ENCODE measurements at regions of chr4 and their contacts with region 1.

Region 1: GRCh38 chr4:15457406-15458201 is 12.1 kb upstream of the CC2D2A start:
- DNase-seq: peak in 2 of 9 experiments; percentile 45 to 63
- ATAC-seq: peak; percentile 59
- H3K4me3 ChIP-seq: no peak overlapping the region
- H3K4me3 Mint-ChIP-seq: no peak overlapping the region
- H3K27ac ChIP-seq: no peak overlapping the region
- H3K27ac Mint-ChIP-seq: no peak overlapping the region
- H3K4me1 ChIP-seq: no peaks in the 10 kb centered on the region
- H3K4me1 Mint-ChIP-seq: peaks cover 3% of the 10 kb centered on the region
- H3K27me3 ChIP-seq: no peaks in the 10 kb centered on the region
- H3K27me3 Mint-ChIP-seq: no peaks in the 10 kb centered on the region
- CTCF ChIP-seq: peak; percentile 77

Region 2: GRCh38 chr4:15226203-15226602 is 231.4 kb before region 1 on chr4:
- CTCF ChIA-PET with region 1: interaction called, 179 read pairs
- POLR2A ChIA-PET with region 1: no interaction called
- intact Hi-C with region 1: loop called (anchors 1 kb)
- DNase-seq: no peak
- ATAC-seq: no peak
- H3K4me3 ChIP-seq: no peak overlapping the region
- H3K4me3 Mint-ChIP-seq: no peak overlapping the region
- H3K27ac ChIP-seq: no peak overlapping the region
- H3K27ac Mint-ChIP-seq: no peak overlapping the region
- H3K4me1 ChIP-seq: peaks cover under 1% of the 10 kb centered on the region
- H3K4me1 Mint-ChIP-seq: no peaks in the 10 kb centered on the region
- H3K27me3 ChIP-seq: no peaks in the 10 kb centered on the region
- H3K27me3 Mint-ChIP-seq: no peaks in the 10 kb centered on the region
- CTCF ChIP-seq: no peak

Region 3: GRCh38 chr4:15238720-15239119 is 218.9 kb before region 1 on chr4:
- CTCF ChIA-PET with region 1: interaction called, 179 read pairs
- POLR2A ChIA-PET with region 1: no interaction called
- intact Hi-C with region 1: loop called in 1 of 2 experiments (anchors 1 kb)
- DNase-seq: peak in 3 of 9 experiments; percentile 8 to 43 (median 33)
- ATAC-seq: peak; percentile 44
- H3K4me3 ChIP-seq: no peak overlapping the region
- H3K4me3 Mint-ChIP-seq: no peak overlapping the region
- H3K27ac ChIP-seq: no peak overlapping the region
- H3K27ac Mint-ChIP-seq: no peak overlapping the region
- H3K4me1 ChIP-seq: peaks cover 8% of the 10 kb centered on the region
- H3K4me1 Mint-ChIP-seq: peaks cover 9% of the 10 kb centered on the region
- H3K27me3 ChIP-seq: no peaks in the 10 kb centered on the region
- H3K27me3 Mint-ChIP-seq: no peaks in the 10 kb centered on the region
- CTCF ChIP-seq: peak; percentile 27

Region 4: DNA sequence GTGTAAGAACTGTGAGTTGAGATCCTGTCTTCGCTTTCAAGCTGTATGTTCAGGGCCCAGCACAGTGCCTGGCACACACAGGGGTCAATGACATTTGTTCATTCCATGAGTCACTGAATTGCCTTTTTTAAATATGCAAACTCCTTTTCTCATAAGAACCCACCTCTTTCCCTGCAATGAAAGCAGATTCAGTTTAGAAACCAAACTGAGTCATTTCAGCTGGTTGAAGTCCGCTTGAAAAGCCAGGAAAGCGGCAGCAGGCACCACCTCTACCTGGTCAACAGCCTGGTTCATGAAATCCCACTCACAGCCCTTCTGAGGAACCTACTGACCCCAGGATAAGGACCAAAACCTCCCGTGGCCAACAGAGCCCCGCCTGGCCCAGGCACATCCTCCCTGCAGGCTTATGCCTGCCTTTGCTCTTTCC is 34.3 kb before region 1 on chr4:
- CTCF ChIA-PET with region 1: interaction called, 12 read pairs
- POLR2A ChIA-PET with region 1: no interaction called
- intact Hi-C with region 1: no loop called
- DNase-seq: no peak
- ATAC-seq: no peak
- H3K4me3 ChIP-seq: no peak overlapping the region
- H3K4me3 Mint-ChIP-seq: no peak overlapping the region
- H3K27ac ChIP-seq: no peak overlapping the region
- H3K27ac Mint-ChIP-seq: no peak overlapping the region
- H3K4me1 ChIP-seq: no peaks in the 10 kb centered on the region
- H3K4me1 Mint-ChIP-seq: peaks cover 2% of the 10 kb centered on the region
- H3K27me3 ChIP-seq: no peaks in the 10 kb centered on the region
- H3K27me3 Mint-ChIP-seq: no peaks in the 10 kb centered on the region
- CTCF ChIP-seq: no peak

Region 5: GRCh38 chr4:15649914-15650545 is 192.4 kb after region 1 on chr4:
- CTCF ChIA-PET with region 1: interaction called, 7 read pairs
- POLR2A ChIA-PET with region 1: no interaction called
- intact Hi-C with region 1: loop called (anchors 1 to 5 kb)
- DNase-seq: peak; percentile 16 to 89 (median 63)
- ATAC-seq: peak; percentile 82
- H3K4me3 ChIP-seq: no peak overlapping the region
- H3K4me3 Mint-ChIP-seq: peak overlapping the region; percentile 48
- H3K27ac ChIP-seq: no peak overlapping the region
- H3K27ac Mint-ChIP-seq: peak overlapping the region; percentile 56
- H3K4me1 ChIP-seq: peaks cover 62% of the 10 kb centered on the region
- H3K4me1 Mint-ChIP-seq: peaks cover 76% of the 10 kb centered on the region
- H3K27me3 ChIP-seq: no peaks in the 10 kb centered on the region
- H3K27me3 Mint-ChIP-seq: no peaks in the 10 kb centered on the region
- CTCF ChIP-seq: peak; percentile 70

Region 6: GRCh38 chr4:17347445-17347844 is 1889.8 kb after region 1 on chr4:
- CTCF ChIA-PET with region 1: no interaction called
- POLR2A ChIA-PET with region 1: no interaction called
- intact Hi-C with region 1: no loop called
- DNase-seq: peak in 3 of 9 experiments; percentile 24 to 49 (median 43)
- ATAC-seq: no peak
- H3K4me3 ChIP-seq: no peak overlapping the region
- H3K4me3 Mint-ChIP-seq: no peak overlapping the region
- H3K27ac ChIP-seq: no peak overlapping the region
- H3K27ac Mint-ChIP-seq: no peak overlapping the region
- H3K4me1 ChIP-seq: no peaks in the 10 kb centered on the region
- H3K4me1 Mint-ChIP-seq: no peaks in the 10 kb centered on the region
- H3K27me3 ChIP-seq: no peaks in the 10 kb centered on the region
- H3K27me3 Mint-ChIP-seq: no peaks in the 10 kb centered on the region
- CTCF ChIP-seq: peak; percentile 43